ENCODE measurements at regions of chr1 and their contacts with region 1.

Region 1: GRCh38 chr1:153796791-153797659 is 21.8 kb downstream of the SLC27A3 start:
- DNase-seq: peak; percentile 59 to 94
- H3K4me3 ChIP-seq: no peak overlapping the region
- H3K27ac ChIP-seq: no peak overlapping the region
- H3K4me1 ChIP-seq: peaks cover 6 to 32% (median 22%) of the 10 kb centered on the region in 4 experiments
- H3K27me3 ChIP-seq: no peaks in the 10 kb centered on the region
- CTCF ChIP-seq: peak in 2 of 3 experiments; percentile 81 to 85; a peak in 3 of 4 replicates
- EP300 ChIP-seq: no peak
- POLR2A ChIP-seq: no peak
- RAD21 ChIP-seq: peak; percentile 70 to 84

Region 2: GRCh38 chr1:153775458-153776327 is 21.3 kb before region 1 on chr1:
- CTCF ChIA-PET with region 1: interaction called, 12 read pairs
- POLR2A ChIA-PET with region 1: interaction called, 14 read pairs
- DNase-seq: peak; percentile 70 to 92
- H3K4me3 ChIP-seq: peak overlapping the region; percentile 66 to 86 (median 83)
- H3K27ac ChIP-seq: peak overlapping the region; percentile 82
- H3K4me1 ChIP-seq: peaks cover 0 to 17% (median 11%) of the 10 kb centered on the region in 4 experiments; a peak in 6 of 7 replicates
- H3K27me3 ChIP-seq: no peaks in the 10 kb centered on the region; a peak in 1 of 7 replicates
- CTCF ChIP-seq: no peak; a peak in 1 of 4 replicates
- EP300 ChIP-seq: 0 out of 3 replicates have a peak, but pooled peaks of 1 of the 2 experiments have one; percentile 51
- POLR2A ChIP-seq: peak; percentile 70 to 93
- RAD21 ChIP-seq: peak in 1 of 2 experiments; percentile 2; a peak in 1 of 4 replicates

Region 3: GRCh38 chr1:153783233-153784190 is 13.5 kb before region 1 on chr1:
- CTCF ChIA-PET with region 1: interaction called, 17 read pairs
- POLR2A ChIA-PET with region 1: interaction called, 14 read pairs
- DNase-seq: peak; percentile 80 to 97
- H3K4me3 ChIP-seq: peak overlapping the region; percentile 62 to 71 (median 66)
- H3K27ac ChIP-seq: peak overlapping the region; percentile 81; the same call in 1 of the 2 replicates
- H3K4me1 ChIP-seq: peaks cover 0 to 2% (median 0%) of the 10 kb centered on the region in 4 experiments; a peak in 2 of 7 replicates
- H3K27me3 ChIP-seq: no peaks in the 10 kb centered on the region; a peak in 1 of 7 replicates
- CTCF ChIP-seq: no peak
- EP300 ChIP-seq: no peak
- POLR2A ChIP-seq: peak in 1 of 2 experiments; percentile 86; a peak in 2 of 3 replicates
- RAD21 ChIP-seq: no peak

Region 4: GRCh38 chr1:153816283-153816889 is 19.4 kb after region 1 on chr1:
- CTCF ChIA-PET with region 1: interaction called, 15 read pairs
- POLR2A ChIA-PET with region 1: interaction called, 5 read pairs
- DNase-seq: no peak
- H3K4me3 ChIP-seq: no peak overlapping the region
- H3K27ac ChIP-seq: no peak overlapping the region
- H3K4me1 ChIP-seq: no peaks in the 10 kb centered on the region
- H3K27me3 ChIP-seq: no peaks in the 10 kb centered on the region
- CTCF ChIP-seq: no peak
- EP300 ChIP-seq: no peak
- POLR2A ChIP-seq: no peak
- RAD21 ChIP-seq: no peak